Activated naive CD4-positive, alpha-beta T cell treated with anti-CD3 and anti-CD28 coated beads for 36 hours (primary cell): ENCODE measurements at regions of chr2 and their contacts with region 1.

Region 1: DNA sequence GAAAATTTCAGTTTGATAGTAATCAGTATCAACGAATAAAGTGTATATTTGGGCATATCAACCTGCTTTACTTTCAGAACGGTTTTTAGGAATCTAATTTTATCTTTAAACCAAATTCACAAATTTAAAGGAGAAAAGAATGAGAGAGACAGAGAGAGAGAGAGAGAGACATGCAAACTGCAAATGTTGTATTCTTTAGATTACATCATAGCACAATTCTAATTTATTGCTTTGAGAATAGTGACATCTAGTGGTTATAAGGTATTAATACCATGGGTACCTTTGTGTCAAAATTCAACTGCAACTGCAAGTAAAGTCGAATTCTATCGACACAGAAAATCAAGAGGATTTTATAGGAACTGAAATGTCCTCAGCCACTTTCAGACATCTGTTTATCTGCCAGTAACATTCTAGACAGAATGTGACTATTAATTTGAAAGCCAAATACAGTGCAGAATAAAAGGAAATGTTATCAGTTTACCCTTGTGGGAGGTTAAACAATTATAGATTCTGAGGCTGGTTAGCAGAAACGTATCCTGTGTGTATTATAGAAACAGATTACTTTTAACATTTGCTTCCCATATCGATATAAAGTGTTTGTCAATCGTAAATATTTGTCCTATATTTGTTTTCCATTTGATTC is 529.8 kb upstream of the VRK2 start:
- DNase-seq: no peak
- H3K4me3 Mint-ChIP-seq: no peak overlapping the region
- H3K27ac Mint-ChIP-seq: no peak overlapping the region
- H3K4me1 Mint-ChIP-seq: no peaks in the 10 kb centered on the region
- H3K27me3 Mint-ChIP-seq: no peaks in the 10 kb centered on the region

Region 2: GRCh38 chr2:56132138-56132537 is 1384.7 kb before region 1 on chr2:
- CTCF ChIA-PET with region 1: no interaction called
- intact Hi-C with region 1: loop called (anchors 5 kb)
- DNase-seq: no peak
- H3K4me3 Mint-ChIP-seq: no peak overlapping the region
- H3K27ac Mint-ChIP-seq: no peak overlapping the region
- H3K4me1 Mint-ChIP-seq: no peaks in the 10 kb centered on the region
- H3K27me3 Mint-ChIP-seq: no peaks in the 10 kb centered on the region

Region 3: DNA sequence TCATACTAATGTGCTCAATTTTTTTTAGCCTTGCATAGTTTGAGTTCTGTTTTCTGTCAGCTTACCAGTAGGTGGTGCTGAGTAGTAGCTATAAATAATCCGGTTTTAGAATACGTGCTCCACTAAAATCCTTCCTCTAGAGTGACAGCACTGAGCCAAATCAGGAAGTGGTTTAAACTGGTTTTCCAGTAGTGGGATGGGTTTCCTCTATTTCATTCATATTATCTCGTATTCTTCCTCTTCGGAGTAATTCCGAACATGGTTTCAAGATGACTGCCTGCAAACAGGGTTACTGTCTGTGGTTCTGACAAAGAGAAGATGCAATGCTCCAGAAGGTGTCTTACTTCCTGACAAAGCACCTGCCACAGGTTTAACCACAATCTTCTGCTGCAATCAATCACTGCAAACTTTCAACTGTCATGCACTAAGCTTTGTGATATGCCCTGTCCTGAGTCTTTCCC is 32.9 kb after region 1 on chr2:
- CTCF ChIA-PET with region 1: no interaction called
- intact Hi-C with region 1: no loop called
- DNase-seq: peak; percentile 4
- H3K4me3 Mint-ChIP-seq: no peak overlapping the region
- H3K27ac Mint-ChIP-seq: no peak overlapping the region
- H3K4me1 Mint-ChIP-seq: peaks cover 5% of the 10 kb centered on the region
- H3K27me3 Mint-ChIP-seq: peaks cover 2% of the 10 kb centered on the region